Calu3 (cell line): ENCODE measurements at regions of chr5 and their contacts with region 1.

Region 1: GRCh38 chr5:53430261-53431252 is 49.9 kb upstream of the FST start:
- DNase-seq: peak; percentile 34
- H3K4me3 Mint-ChIP-seq: no peak overlapping the region
- H3K27ac Mint-ChIP-seq: peak overlapping the region; percentile 27
- H3K4me1 Mint-ChIP-seq: peaks cover 51% of the 10 kb centered on the region
- H3K27me3 Mint-ChIP-seq: no peaks in the 10 kb centered on the region
- CTCF ChIP-seq: peak; percentile 66

Region 2: GRCh38 chr5:53170748-53171349 is 259.7 kb before region 1 on chr5:
- CTCF ChIA-PET with region 1: interaction called, 3 read pairs
- intact Hi-C with region 1: loop called (anchors 1 kb)
- DNase-seq: peak; percentile 35
- H3K4me3 Mint-ChIP-seq: no peak overlapping the region
- H3K27ac Mint-ChIP-seq: no peak overlapping the region
- H3K4me1 Mint-ChIP-seq: no peaks in the 10 kb centered on the region
- H3K27me3 Mint-ChIP-seq: no peaks in the 10 kb centered on the region
- CTCF ChIP-seq: peak; percentile 50

Region 3: DNA sequence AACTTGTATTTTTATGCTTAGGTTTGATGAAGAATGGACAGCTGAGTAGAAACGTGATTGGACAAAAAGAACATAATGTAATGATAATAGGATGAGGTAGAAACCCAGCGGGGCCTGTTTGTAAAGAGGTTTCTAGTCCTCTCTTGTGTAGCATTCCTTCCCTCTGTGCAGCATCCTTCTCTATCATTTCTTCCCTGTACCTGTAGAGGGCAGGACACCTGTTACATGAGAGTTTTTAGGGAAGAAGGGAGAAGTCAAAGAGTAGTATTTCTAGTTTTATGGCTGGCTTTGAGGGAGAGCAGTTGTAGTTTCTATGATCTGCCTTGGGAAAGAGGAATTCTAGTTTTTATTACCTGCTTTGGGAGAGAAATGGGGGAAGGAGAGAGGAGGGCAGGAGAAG is 112.3 kb before region 1 on chr5:
- CTCF ChIA-PET with region 1: interaction called, 4 read pairs
- intact Hi-C with region 1: loop called (anchors 5 kb)
- DNase-seq: no peak
- H3K4me3 Mint-ChIP-seq: no peak overlapping the region
- H3K27ac Mint-ChIP-seq: no peak overlapping the region
- H3K4me1 Mint-ChIP-seq: peaks cover 24% of the 10 kb centered on the region
- H3K27me3 Mint-ChIP-seq: no peaks in the 10 kb centered on the region
- CTCF ChIP-seq: no peak

Region 4: GRCh38 chr5:53362521-53362941 is 68.0 kb before region 1 on chr5:
- CTCF ChIA-PET with region 1: interaction called, 3 read pairs
- intact Hi-C with region 1: loop called (anchors 1 kb)
- DNase-seq: peak; percentile 60
- H3K4me3 Mint-ChIP-seq: no peak overlapping the region
- H3K27ac Mint-ChIP-seq: peak overlapping the region; percentile 99
- H3K4me1 Mint-ChIP-seq: peaks cover 71% of the 10 kb centered on the region
- H3K27me3 Mint-ChIP-seq: no peaks in the 10 kb centered on the region
- CTCF ChIP-seq: no peak

Region 5: DNA sequence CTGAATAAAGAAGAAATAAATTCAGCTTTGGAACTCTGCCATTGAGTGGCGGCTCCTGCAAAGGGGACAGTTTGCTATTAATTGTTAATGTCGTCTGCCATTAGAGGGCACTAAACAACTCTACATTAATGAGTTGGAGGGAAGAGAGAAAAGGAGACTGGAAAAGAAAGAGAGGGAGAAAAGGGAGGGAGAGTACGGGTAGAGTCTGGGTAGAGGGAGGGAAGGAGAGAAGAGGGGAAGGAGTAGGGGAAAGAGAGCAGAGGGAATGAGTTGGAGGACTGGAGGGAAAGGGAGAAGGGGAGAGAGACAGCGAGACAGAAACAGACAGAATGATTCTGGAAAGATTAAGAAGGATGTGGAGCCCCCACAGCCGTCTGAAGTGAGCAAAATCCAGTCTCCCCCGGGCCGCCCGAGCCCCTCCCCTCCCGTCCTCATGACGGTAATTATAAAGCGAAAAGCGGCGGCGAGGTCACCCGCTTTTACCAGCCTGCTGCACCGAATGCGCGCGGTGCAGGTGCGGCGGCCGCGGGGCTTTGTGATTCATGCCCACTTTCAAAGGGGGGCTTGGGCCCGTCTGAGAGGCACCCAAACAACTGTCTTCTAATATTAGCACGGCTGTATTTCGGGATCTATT is 48.0 kb after region 1 on chr5:
- CTCF ChIA-PET with region 1: interaction called, 3 read pairs
- intact Hi-C with region 1: loop called (anchors 5 kb)
- DNase-seq: peak; percentile 47
- H3K4me3 Mint-ChIP-seq: peak overlapping the region; percentile 78
- H3K27ac Mint-ChIP-seq: peak overlapping the region; percentile 55
- H3K4me1 Mint-ChIP-seq: peaks cover 15% of the 10 kb centered on the region
- H3K27me3 Mint-ChIP-seq: no peaks in the 10 kb centered on the region
- CTCF ChIP-seq: peak; percentile 60

Region 6: GRCh38 chr5:54217826-54218503 is 787.4 kb after region 1 on chr5:
- CTCF ChIA-PET with region 1: no interaction called
- intact Hi-C with region 1: loop called (anchors 2 kb)
- DNase-seq: peak; percentile 54
- H3K4me3 Mint-ChIP-seq: no peak overlapping the region
- H3K27ac Mint-ChIP-seq: no peak overlapping the region
- H3K4me1 Mint-ChIP-seq: no peaks in the 10 kb centered on the region
- H3K27me3 Mint-ChIP-seq: no peaks in the 10 kb centered on the region
- CTCF ChIP-seq: peak; percentile 38